ENCODE measurements at regions of chr6 and their contacts with region 1.

Region 1: GRCh38 chr6:5143634-5144311 is 58.6 kb downstream of the PPP1R3G start:
- DNase-seq: peak; percentile 68 to 84
- H3K4me3 ChIP-seq: no peak overlapping the region
- H3K4me3 Mint-ChIP-seq: no peak overlapping the region
- H3K27ac Mint-ChIP-seq: no peak overlapping the region
- H3K4me1 ChIP-seq: no peaks in the 10 kb centered on the region
- H3K4me1 Mint-ChIP-seq: no peaks in the 10 kb centered on the region
- H3K27me3 ChIP-seq: no peaks in the 10 kb centered on the region
- H3K27me3 Mint-ChIP-seq: no peaks in the 10 kb centered on the region
- CTCF ChIP-seq: peak; percentile 84 to 89

Region 2: DNA sequence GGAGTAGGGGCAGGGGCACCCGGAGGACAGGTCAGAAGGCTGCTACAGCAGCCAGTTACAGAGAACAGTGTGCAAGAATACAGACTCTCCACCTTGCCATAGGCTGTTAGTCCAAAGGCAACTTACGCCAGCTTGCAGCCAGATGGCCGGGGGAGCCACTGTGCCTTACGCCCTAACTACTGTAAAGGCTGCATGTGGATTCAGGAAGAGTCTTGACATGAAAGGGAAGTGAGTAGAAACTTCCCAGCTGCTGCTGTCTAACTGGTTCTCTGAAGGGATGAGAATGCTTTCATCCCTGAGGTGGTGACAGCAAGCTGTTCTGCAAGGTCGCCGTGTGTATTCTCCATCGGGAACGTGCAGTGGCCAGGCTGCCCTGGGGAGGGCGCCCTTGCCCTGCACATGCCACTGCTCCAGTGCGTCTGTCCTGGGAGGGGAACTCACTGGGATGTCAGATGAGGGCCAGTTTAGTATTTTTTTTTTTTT is 70.8 kb after region 1 on chr6:
- CTCF ChIA-PET with region 1: interaction called, 12 read pairs
- POLR2A ChIA-PET with region 1: no interaction called
- intact Hi-C with region 1: loop called (anchors 5 kb)
- DNase-seq: peak in 1 of 2 experiments; percentile 68
- H3K4me3 ChIP-seq: no peak overlapping the region
- H3K4me3 Mint-ChIP-seq: no peak overlapping the region
- H3K27ac Mint-ChIP-seq: no peak overlapping the region
- H3K4me1 ChIP-seq: no peaks in the 10 kb centered on the region
- H3K4me1 Mint-ChIP-seq: no peaks in the 10 kb centered on the region
- H3K27me3 ChIP-seq: no peaks in the 10 kb centered on the region
- H3K27me3 Mint-ChIP-seq: no peaks in the 10 kb centered on the region
- CTCF ChIP-seq: peak; percentile 57 to 60

Region 3: DNA sequence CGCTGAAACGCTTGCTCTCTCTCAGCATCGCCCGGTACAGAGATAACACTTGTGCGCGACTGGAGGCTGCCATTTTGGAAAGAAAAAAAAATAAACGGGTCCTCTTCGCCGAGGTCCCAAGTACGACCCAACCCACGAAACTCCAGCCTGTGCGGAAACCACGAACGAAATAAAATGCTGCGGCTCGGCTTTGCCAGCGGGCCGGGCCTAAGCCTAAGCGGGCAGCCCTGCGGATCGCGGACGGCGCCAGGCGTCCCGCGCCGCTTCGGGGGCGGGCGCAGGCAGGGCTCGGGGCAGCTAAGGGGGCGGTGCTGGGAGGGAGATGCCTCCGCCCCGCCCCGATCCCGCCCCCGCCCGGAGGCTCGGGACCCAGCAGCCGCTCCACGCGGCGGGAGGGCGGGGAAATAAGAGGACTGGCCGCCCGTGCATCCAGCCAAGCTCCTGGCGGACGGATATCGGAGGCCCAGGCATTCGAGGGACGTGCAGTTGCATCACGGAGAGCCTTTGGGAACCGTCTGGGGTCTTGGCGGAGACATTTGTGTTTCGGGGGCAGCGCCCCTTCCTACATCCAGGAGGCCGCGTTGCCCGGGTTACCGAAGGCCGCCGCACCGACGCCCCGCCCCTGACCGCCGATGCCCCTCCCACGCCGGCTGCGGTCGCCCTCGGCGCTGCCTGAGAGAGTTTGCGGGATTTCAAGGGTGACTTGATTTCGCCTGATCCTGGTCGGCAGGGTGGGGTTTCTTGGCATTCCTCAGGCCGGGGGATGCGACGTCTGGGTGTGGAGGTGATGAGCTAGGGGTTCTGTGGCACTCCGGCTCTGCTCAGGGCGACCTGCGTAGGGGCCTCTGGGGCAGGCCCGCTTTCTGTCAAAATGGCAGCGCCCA is 117.1 kb after region 1 on chr6 and contains the starts of genes FARS2 and LYRM4:
- CTCF ChIA-PET with region 1: interaction called, 3 read pairs
- POLR2A ChIA-PET with region 1: no interaction called
- intact Hi-C with region 1: loop called (anchors 1 kb)
- DNase-seq: peak; percentile 84 to 92
- H3K4me3 ChIP-seq: peak within 1 kb of the TSS; percentile 91
- H3K4me3 Mint-ChIP-seq: peak within 1 kb of the TSS; percentile 91
- H3K27ac Mint-ChIP-seq: peak within 1 kb of the TSS; percentile 100
- H3K4me1 ChIP-seq: peaks cover 6% of the 10 kb centered on the region; the same call in 1 of the 2 replicates
- H3K4me1 Mint-ChIP-seq: peaks cover 8% of the 10 kb centered on the region
- H3K27me3 ChIP-seq: no peaks in the 10 kb centered on the region
- H3K27me3 Mint-ChIP-seq: no peaks in the 10 kb centered on the region
- CTCF ChIP-seq: no peak
- total RNA-seq, gene FARS2: 14.0 and 15.4 TPM in 2 replicates
- total RNA-seq, gene LYRM4: 52.8 and 56.3 TPM in 2 replicates

Region 4: GRCh38 chr6:5302995-5303622 is 159.3 kb after region 1 on chr6:
- CTCF ChIA-PET with region 1: interaction called, 8 read pairs
- POLR2A ChIA-PET with region 1: no interaction called
- intact Hi-C with region 1: loop called (anchors 1 kb)
- DNase-seq: peak; percentile 32 to 46
- H3K4me3 ChIP-seq: no peak overlapping the region
- H3K4me3 Mint-ChIP-seq: no peak overlapping the region
- H3K27ac Mint-ChIP-seq: no peak overlapping the region
- H3K4me1 ChIP-seq: peaks cover 16% of the 10 kb centered on the region
- H3K4me1 Mint-ChIP-seq: peaks cover 14% of the 10 kb centered on the region
- H3K27me3 ChIP-seq: no peaks in the 10 kb centered on the region
- H3K27me3 Mint-ChIP-seq: no peaks in the 10 kb centered on the region
- CTCF ChIP-seq: peak; percentile 18 to 58

Region 5: GRCh38 chr6:5379647-5380242 is 236.0 kb after region 1 on chr6:
- CTCF ChIA-PET with region 1: interaction called, 8 read pairs
- POLR2A ChIA-PET with region 1: interaction called, 3 read pairs
- intact Hi-C with region 1: loop called (anchors 1 kb)
- DNase-seq: peak in 1 of 2 experiments; percentile 58
- H3K4me3 ChIP-seq: no peak overlapping the region
- H3K4me3 Mint-ChIP-seq: no peak overlapping the region
- H3K27ac Mint-ChIP-seq: no peak overlapping the region
- H3K4me1 ChIP-seq: no peaks in the 10 kb centered on the region
- H3K4me1 Mint-ChIP-seq: peaks cover 7% of the 10 kb centered on the region
- H3K27me3 ChIP-seq: no peaks in the 10 kb centered on the region
- H3K27me3 Mint-ChIP-seq: no peaks in the 10 kb centered on the region
- CTCF ChIP-seq: peak; percentile 63 to 65

Region 6: GRCh38 chr6:5398530-5398929 is 254.8 kb after region 1 on chr6:
- CTCF ChIA-PET with region 1: no interaction called
- POLR2A ChIA-PET with region 1: no interaction called
- intact Hi-C with region 1: loop called (anchors 1 kb)
- DNase-seq: peak in 1 of 2 experiments; percentile 42
- H3K4me3 ChIP-seq: no peak overlapping the region
- H3K4me3 Mint-ChIP-seq: no peak overlapping the region
- H3K27ac Mint-ChIP-seq: no peak overlapping the region
- H3K4me1 ChIP-seq: no peaks in the 10 kb centered on the region
- H3K4me1 Mint-ChIP-seq: no peaks in the 10 kb centered on the region
- H3K27me3 ChIP-seq: no peaks in the 10 kb centered on the region
- H3K27me3 Mint-ChIP-seq: no peaks in the 10 kb centered on the region
- CTCF ChIP-seq: peak; percentile 40 to 43